ENCODE measurements at regions of chr12 and their contacts with region 1.

Region 1: DNA sequence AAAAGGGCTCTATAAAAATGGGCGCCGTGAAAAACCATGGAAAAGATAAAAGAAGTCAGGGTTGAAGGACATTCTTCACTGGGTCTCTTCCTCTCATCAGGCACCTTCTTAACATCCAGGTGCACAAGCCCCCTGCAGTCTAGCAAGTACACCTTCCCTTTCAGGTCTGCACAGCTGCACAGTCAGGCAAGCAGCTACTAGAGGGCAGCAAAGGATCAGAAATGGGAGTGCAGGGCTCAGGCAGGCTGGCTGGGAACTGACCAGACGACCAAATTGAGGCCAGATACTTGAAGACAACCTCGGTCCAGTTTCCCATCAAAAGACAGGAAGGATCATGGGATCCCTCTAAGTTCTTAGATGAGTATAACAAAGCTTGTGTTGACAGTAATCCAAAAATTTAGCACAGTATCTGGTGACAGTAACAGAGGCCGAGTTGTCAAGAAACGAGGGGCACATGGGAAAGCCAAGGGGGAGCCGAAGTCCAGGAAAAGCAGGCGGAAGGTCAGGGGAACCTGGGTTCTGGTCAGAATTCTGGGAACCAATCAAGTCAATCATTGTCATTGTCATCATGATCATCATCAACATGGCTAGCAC is 10.1 kb upstream of the GRIP1 start:
- DNase-seq: no peak
- ATAC-seq: peak; percentile 86

Region 2: DNA sequence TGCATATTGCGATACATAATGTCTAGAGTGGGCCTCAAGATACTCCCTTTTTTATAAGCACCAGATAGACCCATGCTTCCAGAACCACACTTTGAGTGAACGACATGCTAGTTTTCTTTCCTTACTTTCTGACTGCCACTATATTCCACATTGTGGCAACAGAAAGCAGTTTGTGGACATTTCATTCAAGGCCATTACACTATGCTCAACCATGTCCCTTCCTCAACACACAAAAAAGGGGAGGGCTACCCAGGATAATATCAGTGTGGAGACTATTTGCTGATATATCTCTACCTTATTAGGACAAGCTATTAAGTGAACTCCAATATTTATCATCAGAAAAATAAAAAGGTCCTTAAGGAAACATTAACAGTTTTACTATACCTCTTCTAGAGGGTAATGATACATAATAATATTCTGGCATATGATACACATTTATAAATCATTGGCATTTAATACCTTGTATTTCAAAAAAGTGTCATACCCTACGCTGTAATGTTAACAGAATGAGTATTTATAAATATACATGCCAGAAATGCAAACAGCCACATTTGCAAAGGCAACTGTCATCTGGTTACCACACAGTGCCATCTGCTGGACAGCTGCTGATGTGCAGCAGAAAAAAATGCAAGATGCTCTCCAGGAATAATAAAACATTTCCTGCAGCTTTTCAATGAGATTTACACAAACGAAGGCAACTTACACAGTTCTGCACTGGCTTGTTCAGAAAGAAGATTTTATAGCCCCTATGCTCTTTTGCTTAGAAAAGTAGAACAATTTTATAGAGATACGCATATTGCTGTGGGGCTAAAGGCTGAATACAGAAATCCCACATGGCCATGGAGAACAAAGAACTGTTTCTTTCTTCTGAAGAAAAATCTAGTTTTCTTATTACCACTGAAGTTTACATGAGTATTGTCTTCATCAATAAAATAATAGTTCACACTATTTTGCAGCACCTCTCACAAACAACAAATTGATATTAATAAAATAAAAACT is 172.1 kb after region 1 on chr12:
- intact Hi-C with region 1: loop called (anchors 2 kb)
- DNase-seq: peak; percentile 47
- ATAC-seq: peak; percentile 56